OCI-LY7 (cell line): ENCODE measurements at regions of chr6 and their contacts with region 1.

Region 1: GRCh38 chr6:11381801-11382513 is 149.5 kb upstream of the NEDD9 start:
- DNase-seq: peak; percentile 83
- H3K4me3 ChIP-seq: peak overlapping the region; percentile 72
- H3K27ac ChIP-seq: peak overlapping the region; percentile 76
- H3K4me1 ChIP-seq: peaks cover 43% of the 10 kb centered on the region
- CTCF ChIP-seq: no peak

Region 2: GRCh38 chr6:10534419-10534762 is 847.6 kb before region 1 on chr6:
- CTCF ChIA-PET with region 1: no interaction called
- POLR2A ChIA-PET with region 1: no interaction called
- intact Hi-C with region 1: loop called (anchors 10 kb)
- DNase-seq: peak; percentile 87
- H3K4me3 ChIP-seq: peak overlapping the region; percentile 89
- H3K27ac ChIP-seq: peak overlapping the region; percentile 95
- H3K4me1 ChIP-seq: peaks cover 71% of the 10 kb centered on the region
- CTCF ChIP-seq: no peak

Region 3: DNA sequence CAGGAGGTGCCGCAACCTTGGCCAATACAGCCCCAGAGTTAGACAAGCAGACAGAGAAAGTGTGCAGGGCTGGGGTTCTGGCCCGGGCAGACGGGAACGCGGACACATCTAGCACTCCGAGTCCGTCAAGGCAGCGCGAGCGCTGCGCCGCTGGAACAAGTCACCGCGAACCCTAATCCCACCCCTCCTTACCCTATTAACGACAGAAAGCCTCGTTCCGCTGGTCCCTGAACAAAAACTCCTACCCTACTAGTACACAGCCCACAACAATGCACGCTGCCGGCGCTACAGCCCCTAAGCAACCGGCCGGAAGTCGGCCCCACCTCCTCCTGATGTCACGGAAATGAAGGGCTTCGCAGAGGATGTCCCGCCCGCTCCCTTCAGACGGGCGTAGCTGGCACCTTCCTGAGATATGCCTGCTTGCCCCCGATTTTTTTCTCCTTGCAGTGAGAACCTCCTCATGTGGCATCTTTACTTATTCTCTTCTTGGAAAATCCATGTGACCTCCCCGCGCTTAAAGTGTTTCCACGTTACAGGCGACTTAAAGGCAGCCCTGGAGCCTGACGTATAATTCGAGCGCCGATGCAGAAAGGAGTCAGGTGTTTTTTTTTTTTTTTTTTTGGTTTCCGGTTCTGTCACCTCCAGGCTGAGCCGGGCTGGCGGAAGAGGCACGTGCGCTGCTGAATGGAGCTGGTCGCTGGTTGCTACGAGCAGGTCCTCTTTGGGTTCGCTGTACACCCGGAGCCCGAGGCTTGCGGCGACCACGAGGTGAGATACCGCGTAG is 687.5 kb before region 1 on chr6 and contains the starts of genes C6orf52 and PAK1IP1:
- CTCF ChIA-PET with region 1: no interaction called
- POLR2A ChIA-PET with region 1: no interaction called
- intact Hi-C with region 1: no loop called
- DNase-seq: peak; percentile 97
- H3K4me3 ChIP-seq: peak within 1 kb of the TSS; percentile 92
- H3K27ac ChIP-seq: peak within 1 kb of the TSS; percentile 84
- H3K4me1 ChIP-seq: peaks cover 15% of the 10 kb centered on the region
- CTCF ChIP-seq: no peak
- total RNA-seq, gene C6orf52: 0.66 TPM in 1 of 2 replicates, not detected in the other
- total RNA-seq, gene PAK1IP1: 27.8 and 29.7 TPM in 2 replicates

Region 4: GRCh38 chr6:11093589-11094410 is 288.2 kb before region 1 on chr6 and contains the start of gene SMIM13:
- CTCF ChIA-PET with region 1: no interaction called
- POLR2A ChIA-PET with region 1: interaction called, 4 read pairs
- intact Hi-C with region 1: loop called (anchors 5 kb)
- DNase-seq: peak; percentile 97
- H3K4me3 ChIP-seq: peak within 1 kb of the TSS; percentile 72
- H3K27ac ChIP-seq: peak within 1 kb of the TSS; percentile 70
- H3K4me1 ChIP-seq: peaks cover 31% of the 10 kb centered on the region
- CTCF ChIP-seq: peak; percentile 56
- total RNA-seq, gene SMIM13: 13.9 and 16.4 TPM in 2 replicates

Region 5: GRCh38 chr6:11232193-11232769 is 149.7 kb before region 1 on chr6 and contains the start of gene NEDD9:
- CTCF ChIA-PET with region 1: no interaction called
- POLR2A ChIA-PET with region 1: interaction called, 4 read pairs
- intact Hi-C with region 1: loop called (anchors 5 kb)
- DNase-seq: peak; percentile 90
- H3K4me3 ChIP-seq: peak within 1 kb of the TSS; percentile 65
- H3K27ac ChIP-seq: no peak within 1 kb of the TSS
- H3K4me1 ChIP-seq: peaks cover 13% of the 10 kb centered on the region
- CTCF ChIP-seq: peak; percentile 48; the same call in 1 of the 2 replicates
- total RNA-seq, gene NEDD9: 7.4 and 13.0 TPM in 2 replicates

Region 6: DNA sequence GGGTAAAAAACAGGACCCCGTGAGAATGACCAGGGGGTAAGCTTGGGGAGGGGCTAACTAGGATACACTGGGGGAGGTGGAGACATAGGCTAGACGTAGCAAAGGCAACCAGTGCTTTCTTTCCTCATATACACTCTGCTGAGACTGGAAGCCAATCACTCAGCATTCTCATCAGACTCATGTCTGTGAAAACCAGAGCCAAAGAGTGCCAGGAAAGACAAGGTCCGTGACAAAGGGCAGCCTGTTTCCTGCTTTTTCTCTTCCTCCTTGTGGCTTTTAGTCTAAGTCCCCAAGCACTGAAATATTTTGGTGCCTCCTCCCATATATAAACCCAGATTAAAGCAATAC is 51.6 kb before region 1 on chr6:
- CTCF ChIA-PET with region 1: no interaction called
- POLR2A ChIA-PET with region 1: interaction called, 3 read pairs
- intact Hi-C with region 1: loop called (anchors 5 kb)
- DNase-seq: no peak
- H3K4me3 ChIP-seq: no peak overlapping the region
- H3K27ac ChIP-seq: no peak overlapping the region
- H3K4me1 ChIP-seq: peaks cover 34% of the 10 kb centered on the region
- CTCF ChIP-seq: no peak

Region 7: DNA sequence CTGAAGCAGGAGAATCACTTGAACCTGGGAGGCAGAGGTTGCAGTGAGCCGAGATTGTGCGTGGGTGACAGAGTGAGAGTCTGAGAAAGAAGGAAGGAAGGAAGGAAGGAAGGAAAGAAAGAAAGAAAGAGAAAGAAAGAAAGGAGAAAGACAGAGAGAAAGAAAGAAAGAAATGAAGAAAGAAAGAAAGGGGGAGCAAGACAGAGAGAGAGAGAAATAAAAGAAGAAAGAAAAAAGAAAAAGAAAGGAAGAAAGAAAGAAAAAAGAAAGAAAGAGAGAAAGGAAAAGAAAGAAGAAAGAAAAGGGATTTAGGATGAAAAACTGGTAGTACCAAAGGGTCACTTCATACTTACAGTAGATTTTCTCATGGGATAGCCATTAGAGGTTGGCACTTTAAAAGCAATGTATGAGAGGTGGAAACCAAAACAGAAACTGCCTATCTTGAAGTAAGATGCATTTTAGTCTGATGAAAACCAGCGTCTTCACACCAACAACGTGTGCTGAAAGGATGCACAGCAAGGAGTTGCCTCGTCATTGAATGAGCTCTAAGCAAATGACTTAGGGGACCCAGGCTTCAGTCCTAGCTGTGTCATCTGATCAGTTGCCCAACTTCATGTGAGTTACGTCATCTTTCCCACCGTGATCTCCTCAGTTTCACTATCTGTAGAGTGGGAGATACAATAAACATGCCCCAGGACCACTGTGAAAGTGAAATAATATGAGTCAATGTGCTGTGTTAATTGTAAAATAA is 15.6 kb before region 1 on chr6:
- CTCF ChIA-PET with region 1: interaction called, 3 read pairs
- POLR2A ChIA-PET with region 1: interaction called, 11 read pairs
- intact Hi-C with region 1: no loop called
- DNase-seq: no peak
- H3K4me3 ChIP-seq: no peak overlapping the region
- H3K27ac ChIP-seq: no peak overlapping the region
- H3K4me1 ChIP-seq: no peaks in the 10 kb centered on the region
- CTCF ChIP-seq: no peak

Region 8: DNA sequence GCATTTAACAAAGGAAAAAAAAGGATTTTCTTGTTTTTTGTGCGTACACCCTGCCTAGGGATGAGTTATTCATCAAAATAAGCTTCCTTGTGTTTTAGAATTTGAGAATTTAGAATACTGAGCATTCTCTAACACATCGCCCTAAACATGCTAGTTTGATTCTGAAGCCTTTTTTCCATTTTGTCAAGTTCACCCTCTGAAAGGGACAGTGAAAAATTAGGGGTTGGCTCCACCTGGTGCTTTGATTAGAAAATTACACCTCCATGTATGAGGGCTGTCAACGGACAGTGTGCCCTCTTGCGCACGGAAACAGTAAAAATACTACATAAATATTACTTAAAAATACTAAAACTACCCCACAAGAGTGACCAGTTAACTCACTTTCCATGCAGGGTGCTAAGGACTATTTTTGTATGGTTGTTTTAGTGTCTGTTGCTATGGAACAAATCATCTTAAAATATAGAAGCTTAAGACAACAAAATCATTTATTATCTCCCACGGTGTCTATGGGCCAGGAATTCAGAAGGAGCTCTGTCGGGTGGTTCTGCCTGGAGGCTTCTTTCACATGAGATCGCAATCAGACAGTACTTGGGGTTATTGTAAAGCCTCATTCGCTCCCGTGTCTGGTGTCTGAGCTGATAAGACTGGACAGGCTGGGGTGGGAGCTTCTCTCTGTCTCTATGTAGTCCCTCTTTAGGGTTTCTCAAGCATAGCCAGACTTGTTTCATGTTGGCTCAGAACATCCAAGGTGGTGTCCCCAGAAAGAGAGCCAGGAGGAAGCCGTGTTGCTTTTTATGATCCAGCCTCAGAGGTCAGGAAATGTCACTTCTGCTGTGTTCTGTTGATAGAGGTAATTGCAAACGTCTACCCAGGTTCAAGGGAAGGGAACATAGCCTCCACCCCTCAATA is 114.4 kb after region 1 on chr6:
- CTCF ChIA-PET with region 1: interaction called, 4 read pairs
- POLR2A ChIA-PET with region 1: interaction called, 9 read pairs
- intact Hi-C with region 1: loop called (anchors 2 kb)
- DNase-seq: peak; percentile 84
- H3K4me3 ChIP-seq: no peak overlapping the region
- H3K27ac ChIP-seq: no peak overlapping the region
- H3K4me1 ChIP-seq: peaks cover 28% of the 10 kb centered on the region
- CTCF ChIP-seq: peak; percentile 100

Region 9: DNA sequence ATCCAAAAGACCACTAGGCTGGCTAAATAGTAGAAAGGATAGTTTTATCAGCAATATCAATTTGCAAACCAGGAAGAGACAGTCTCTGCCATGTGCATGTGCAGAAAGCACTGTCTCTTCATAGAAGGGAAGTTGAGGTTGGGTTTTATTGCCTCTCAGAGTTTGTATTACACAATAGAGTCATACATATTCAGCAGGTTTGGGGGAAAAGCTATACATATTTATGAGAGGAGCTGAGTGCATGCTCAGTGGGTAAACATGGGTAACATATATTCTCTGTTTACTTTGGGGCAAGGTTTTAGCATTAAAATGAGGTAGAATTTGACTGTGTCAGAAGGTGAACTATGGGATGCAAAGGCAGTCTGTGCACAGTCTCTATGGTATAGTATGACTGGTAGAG is 170.5 kb after region 1 on chr6:
- CTCF ChIA-PET with region 1: no interaction called
- POLR2A ChIA-PET with region 1: no interaction called
- intact Hi-C with region 1: no loop called
- DNase-seq: no peak
- H3K4me3 ChIP-seq: no peak overlapping the region
- H3K27ac ChIP-seq: no peak overlapping the region
- H3K4me1 ChIP-seq: no peaks in the 10 kb centered on the region
- CTCF ChIP-seq: no peak